Dorsolateral prefrontal cortex (tissue), 120 donors: ENCODE measurements at regions of chr7 and their contacts with region 1.

Region 1: DNA sequence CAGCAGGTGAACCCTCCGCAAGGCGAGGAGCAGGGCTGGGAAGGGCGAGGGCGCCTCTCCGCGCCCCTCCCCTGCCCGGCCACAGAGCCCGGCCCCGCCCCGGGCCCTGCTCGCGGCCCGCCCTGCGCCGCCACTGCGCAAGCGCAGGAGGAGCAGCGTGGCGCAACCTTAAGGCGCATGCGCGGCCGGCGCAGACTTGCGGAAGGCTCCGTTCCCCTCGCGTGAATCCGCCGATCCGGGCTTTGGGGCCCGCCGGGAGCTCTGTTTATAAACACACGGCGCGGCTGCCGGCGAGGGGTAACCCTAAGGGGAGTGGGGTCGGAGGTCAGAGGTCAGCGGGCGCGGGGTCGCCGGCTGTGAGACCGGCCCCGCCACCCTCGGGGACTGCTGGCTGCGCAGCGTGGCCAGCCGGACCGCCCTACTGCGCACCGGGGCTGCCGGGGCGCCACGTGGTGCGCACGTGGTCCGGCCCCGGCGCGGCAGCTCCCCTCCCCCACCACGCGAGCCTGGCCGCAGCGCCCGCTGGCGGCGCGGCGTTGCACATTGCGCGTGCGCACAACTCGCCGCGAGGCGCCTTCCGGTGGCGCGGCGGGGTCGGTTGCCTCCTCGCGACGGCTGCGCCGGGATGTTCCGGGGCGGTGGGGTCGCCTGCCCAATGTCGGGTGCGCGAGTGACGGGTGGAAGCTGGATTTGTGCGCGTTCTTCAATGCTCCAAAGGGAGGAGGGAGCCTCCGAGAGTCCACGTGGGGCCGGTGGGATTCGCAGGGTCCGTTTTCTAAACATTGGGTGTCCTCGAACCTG is 40.2 kb upstream of the FOXK1 start:
- DNase-seq: peak; percentile 75 to 89 (median 82)
- H3K4me3 ChIP-seq: peak overlapping the region; percentile 63 to 100 (median 84)
- H3K27ac ChIP-seq: peak overlapping the region; percentile 81 to 99 (median 96)
- H3K27me3 ChIP-seq: no peaks in the 10 kb centered on the region
- CTCF ChIP-seq: peak in 55 of 56 donors; percentile 33 to 91 (median 61)

Region 2: GRCh38 chr7:3835109-3835508 is 806.8 kb before region 1 on chr7:
- intact Hi-C with region 1: no loop called
- DNase-seq: no peak
- H3K4me3 ChIP-seq: no peak overlapping the region
- H3K27ac ChIP-seq: no peak overlapping the region
- H3K27me3 ChIP-seq: peaks cover 0 to 8% (median 0%) of the 10 kb centered on the region in 45 donors
- CTCF ChIP-seq: no peak

Region 3: GRCh38 chr7:3981281-3981680 is 660.6 kb before region 1 on chr7:
- intact Hi-C with region 1: no loop called
- DNase-seq: no peak
- H3K4me3 ChIP-seq: no peak overlapping the region
- H3K27ac ChIP-seq: no peak overlapping the region
- H3K27me3 ChIP-seq: no peaks in the 10 kb centered on the region
- CTCF ChIP-seq: peak in 20 of 56 donors; percentile 10 to 63 (median 29)

Region 4: DNA sequence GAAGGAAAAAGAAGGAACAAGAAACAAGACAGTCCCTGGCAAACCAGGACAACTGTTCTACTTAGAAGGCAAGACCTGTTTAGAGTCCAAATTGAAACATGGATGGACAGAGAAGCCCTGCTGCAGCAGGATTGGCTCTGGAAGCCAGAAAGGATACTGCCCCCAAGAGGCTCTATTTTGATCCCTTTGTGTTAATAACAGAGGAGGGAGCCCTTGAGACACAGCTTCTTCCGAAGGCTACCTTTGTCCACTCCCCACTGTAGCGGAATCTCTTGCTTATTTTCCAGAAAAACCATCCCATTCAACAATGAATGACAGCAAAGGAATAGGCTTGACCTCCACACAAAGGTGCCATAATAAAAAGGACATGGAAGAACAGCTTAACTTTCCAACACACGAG is 80.1 kb before region 1 on chr7:
- intact Hi-C with region 1: no loop called
- DNase-seq: no peak
- H3K4me3 ChIP-seq: no peak overlapping the region
- H3K27ac ChIP-seq: no peak overlapping the region
- H3K27me3 ChIP-seq: peaks cover 0 to 17% (median 0%) of the 10 kb centered on the region in 45 donors
- CTCF ChIP-seq: no peak

Region 5: DNA sequence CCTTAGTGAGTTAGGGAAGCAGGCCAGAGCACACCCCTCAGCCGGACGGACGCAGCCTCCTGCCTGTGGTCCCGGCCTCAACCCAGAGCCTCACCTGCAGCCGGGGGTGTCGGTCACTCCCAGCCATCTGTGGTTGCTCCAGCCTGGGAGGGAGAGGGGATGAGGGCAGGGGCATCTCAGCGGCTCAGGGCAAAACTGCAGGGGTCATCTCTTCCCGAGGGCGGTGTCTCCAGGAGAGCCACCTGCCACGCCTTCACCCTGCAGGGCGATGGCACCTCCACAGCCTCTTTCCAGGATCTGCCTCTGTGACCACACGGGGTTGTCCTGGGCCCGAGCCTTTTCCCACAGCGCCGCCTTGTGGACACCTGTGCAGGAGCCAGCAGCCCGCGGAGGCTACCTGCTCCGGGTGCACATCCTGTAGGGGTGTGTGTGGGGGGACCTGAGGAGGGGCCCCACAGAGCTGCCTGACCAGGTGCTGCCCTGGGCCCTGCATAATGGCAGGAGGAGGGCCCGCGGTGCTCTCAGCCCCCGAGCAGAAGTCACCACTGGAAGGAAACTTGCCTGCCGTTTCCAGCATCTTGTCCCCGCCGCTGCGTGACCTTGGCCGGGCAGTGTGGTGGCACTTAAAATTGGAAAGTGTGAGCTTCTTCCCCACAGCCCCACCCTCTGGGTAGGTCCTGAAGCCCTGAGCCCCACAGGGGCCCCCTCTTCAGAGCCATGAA is 112.0 kb after region 1 on chr7:
- intact Hi-C with region 1: loop called (anchors 2 kb)
- DNase-seq: peak; percentile 73 to 86 (median 76)
- H3K4me3 ChIP-seq: peak overlapping the region in 1 of 59 donors; percentile 14
- H3K27ac ChIP-seq: peak overlapping the region in 51 of 59 donors; percentile 8 to 99 (median 90)
- H3K27me3 ChIP-seq: no peaks in the 10 kb centered on the region
- CTCF ChIP-seq: peak; percentile 70 to 99 (median 94)

Region 6: DNA sequence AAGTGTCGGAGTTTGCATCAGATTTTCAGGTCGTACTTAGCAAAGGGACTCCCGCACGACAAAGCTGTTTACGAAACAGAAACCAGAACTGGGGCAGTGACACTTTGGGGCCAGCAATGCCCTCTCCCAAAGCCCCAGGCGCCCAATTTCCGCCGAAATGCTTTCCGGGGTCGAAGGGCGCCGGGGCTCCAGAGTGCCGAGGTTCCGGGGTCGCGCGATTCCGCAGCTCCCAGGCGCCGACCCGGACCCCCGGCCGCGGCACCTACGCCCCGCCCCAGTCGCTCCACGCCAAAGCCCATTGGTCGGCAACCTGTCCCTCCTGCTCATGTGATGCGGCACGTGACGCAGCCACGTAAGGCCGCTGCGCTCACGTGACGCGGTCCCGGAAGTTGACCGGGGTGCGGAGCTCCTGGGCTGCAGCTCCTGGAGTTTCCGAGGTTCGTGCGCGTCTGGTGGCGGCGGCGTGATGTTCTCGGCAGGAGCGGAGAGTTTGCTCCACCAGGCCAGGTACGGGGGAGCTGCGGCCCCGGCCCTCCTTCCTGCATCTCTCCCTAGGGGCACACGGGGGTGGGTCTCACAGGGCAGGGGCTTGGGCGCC is 133.5 kb after region 1 on chr7 and contains the start of gene AP5Z1:
- intact Hi-C with region 1: loop called in 1 of 2 experiments (anchors 5 kb)
- DNase-seq: peak; percentile 96 to 99 (median 98)
- H3K4me3 ChIP-seq: peak within 1 kb of the TSS; percentile 73 to 100 (median 93)
- H3K27ac ChIP-seq: peak within 1 kb of the TSS; percentile 51 to 97 (median 91)
- H3K27me3 ChIP-seq: no peaks in the 10 kb centered on the region
- CTCF ChIP-seq: peak in 19 of 56 donors; percentile 10 to 51 (median 19)
- total RNA-seq, gene AP5Z1: 24.1 to 55.6 (median 34.6) TPM